ENCODE measurements at regions of chr7 and their contacts with region 1.

Region 1: DNA sequence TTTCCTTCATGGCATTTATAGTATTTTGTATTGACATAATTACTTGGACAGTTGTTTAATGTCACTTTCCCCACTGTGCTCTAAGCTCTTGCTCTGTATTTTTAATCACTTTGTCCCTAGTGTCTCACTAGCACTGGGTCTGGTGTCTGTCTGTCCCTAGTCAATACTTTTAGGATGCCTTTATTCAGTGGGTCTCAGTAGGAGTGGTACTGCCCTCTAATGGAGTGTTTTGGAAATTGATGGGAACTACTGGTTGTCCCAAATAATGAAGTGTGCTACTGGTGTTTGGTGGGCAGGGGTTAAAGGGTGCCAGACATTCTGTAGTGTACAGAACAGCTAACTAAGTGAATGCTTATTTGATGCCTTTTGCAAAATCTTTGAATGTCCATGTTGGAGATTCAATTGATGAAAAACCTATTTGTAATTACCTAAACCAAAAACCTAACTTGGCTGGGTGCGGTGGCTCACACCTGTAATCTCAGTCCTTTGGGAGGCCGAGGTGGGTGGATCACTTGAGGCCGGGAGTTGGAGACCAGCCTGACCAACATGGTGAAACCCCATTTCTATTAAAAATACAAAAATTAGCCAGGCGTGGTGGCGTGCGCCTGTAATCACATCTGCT is 33.3 kb downstream of the CDK14 start:
- DNase-seq: no peak
- ATAC-seq: peak; percentile 72

Region 2: DNA sequence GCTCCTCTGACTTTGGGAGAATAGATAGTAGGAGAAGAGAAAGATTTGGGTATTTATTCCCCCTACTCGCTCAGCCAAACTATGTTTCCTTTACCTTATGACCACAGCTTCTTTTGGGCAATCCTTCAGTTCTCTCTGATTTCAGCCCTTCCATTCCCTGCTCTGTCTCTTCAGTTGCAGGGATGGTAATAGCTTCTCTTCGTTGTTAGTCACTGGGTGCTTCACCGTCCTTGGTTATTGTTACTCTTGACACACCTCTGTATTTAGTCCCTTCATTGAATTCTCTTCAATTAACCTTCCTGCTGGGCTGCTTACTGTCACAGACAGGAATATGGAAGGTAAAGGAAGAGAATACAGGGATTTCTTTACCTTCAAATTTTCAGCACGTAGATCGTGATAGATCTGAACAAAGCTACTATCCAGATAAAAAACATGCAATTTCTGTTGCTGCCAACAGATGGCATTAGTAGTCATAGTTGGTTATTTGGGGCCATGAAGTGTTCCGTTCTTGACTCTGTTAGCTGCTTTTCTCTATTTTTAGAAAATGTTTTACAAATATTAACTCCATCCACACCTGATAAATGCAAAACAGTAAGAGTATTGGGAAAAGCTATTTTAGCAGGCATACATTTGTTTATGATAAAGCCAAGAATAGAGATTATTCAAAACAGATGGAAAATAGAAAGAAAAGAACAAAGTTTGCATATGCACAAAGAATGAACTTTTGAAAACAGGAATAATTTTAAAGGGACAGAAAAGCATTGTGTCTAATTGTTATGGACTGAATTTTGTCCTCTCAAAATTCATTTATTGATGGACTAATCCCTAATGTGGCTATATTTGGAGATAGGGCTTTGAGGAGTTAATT is 174.0 kb before region 1 on chr7:
- intact Hi-C with region 1: loop called (anchors 5 kb)
- DNase-seq: no peak
- ATAC-seq: peak; percentile 63

Region 3: DNA sequence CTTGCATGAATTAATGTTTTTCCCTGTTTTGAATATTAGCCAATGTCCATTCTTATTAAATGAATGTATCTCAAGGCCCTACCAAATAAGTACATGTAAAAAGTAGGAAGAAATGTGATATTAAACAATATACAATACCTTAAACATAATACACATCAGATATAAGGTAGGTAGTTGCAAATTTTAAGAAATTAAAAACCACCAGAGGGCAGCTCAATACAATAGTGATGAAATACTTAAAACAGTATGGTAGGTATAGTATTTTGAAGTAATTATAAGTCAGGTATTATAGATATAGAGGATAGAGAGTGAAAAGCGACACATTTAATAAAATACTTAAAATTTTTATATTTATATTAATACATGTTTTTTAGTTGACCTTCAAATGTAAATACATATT is 76.9 kb before region 1 on chr7:
- intact Hi-C with region 1: loop called (anchors 5 kb)
- DNase-seq: no peak
- ATAC-seq: no peak

Region 4: DNA sequence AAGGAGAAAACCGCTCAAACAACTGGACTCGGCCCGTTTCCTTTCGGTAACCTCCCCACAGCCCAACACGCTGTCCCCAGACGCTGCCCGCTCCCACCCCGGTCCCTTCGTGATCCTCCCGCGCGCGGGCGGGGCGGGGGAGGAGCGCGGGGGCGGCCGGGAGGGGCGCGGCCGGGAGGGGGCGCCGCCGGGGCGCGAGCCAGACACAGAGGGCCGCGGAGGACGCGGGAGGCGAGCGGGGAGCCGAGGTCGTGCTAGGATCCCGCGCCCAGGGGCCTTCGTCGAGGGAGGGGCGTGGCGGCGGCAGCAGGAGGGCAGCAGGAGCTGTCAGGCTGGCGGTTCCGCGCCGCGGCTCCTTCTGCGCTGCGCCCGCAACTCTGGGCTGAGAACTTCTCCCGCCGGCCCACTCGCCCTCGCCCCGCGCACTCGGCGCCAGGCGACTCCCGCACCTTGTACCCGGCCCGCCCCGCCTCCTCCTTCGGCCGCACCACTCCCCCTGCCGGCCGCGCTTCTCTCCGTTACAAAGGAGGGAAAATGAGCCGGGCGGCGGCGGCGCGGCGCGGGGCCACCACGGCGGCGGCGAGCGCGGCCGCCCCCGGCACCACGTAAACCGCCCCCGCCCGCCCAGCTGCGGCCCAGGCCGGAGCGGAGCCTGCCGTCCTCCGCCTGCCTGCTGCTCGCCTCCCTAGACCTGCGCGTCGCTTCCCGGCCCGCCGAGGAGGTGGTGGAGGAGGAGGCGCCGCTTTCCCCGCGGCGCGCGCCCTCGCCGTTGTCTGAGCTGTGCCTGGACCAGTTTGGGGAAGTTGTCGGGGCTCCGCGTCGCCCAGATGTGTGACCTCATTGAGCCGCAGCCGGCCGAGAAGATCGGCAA is 33.4 kb before region 1 on chr7 and contains the start of gene CDK14:
- intact Hi-C with region 1: loop called (anchors 2 kb)
- DNase-seq: peak; percentile 95
- ATAC-seq: peak; percentile 85
- total RNA-seq, gene CDK14: 26.3 TPM